ENCODE measurements at regions of chr19 and their contacts with region 1.

Region 1: GRCh38 chr19:52028027-52028779 is at the start of gene ZNF614:
- H3K4me3 Mint-ChIP-seq: peak within 1 kb of the TSS; percentile 98
- H3K27ac Mint-ChIP-seq: peak within 1 kb of the TSS; percentile 100
- H3K4me1 Mint-ChIP-seq: peaks cover 27% of the 10 kb centered on the region
- H3K27me3 Mint-ChIP-seq: no peaks in the 10 kb centered on the region

Region 2: DNA sequence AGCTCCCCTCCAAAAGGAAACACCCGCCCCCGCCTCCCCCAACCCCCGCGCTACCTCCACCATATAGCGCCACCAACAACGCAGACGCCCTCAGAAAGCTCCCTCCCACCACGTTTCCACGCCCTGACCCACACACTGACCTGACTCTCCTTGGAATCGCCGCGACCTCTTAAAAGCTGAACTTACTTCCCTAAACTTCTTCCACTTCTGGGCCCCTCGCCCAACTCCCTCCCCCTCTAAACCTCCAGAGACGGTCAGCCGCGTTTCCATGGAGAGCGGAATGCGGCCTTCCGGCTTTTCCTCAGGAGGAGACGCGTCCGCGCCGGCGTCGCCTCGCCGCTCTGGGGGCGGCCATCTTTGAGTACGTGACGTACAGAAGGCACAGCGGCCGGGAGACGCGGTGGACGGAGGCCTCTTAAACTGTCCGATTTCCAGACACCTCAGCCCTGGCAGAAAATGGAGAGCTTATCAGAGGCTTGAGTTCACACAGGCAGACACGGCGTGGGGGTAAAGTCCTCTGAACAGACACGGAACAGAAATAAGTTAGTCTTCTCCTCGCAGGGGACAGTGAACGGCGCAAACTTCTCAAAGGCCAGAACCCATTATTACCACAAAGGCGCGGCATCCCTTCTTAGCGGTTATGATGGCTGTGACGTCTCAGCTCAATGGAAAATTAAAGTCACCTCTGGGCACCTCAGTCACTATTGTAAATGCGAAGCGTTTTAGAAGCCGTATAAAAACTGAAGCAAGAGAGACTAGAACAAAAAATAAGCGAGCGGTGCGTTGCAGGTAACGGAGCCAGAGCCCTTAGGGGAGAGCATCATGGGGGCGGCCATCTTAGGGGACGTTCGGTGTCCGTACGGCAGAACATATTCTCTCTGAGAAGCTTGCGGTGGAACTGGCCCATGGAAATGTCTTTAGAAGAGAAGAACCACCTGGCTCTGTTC is 20.6 kb after region 1 on chr19 and contains the start of gene ZNF432:
- intact Hi-C with region 1: loop called (anchors 1 kb)
- H3K4me3 Mint-ChIP-seq: peak within 1 kb of the TSS; percentile 83
- H3K27ac Mint-ChIP-seq: peak within 1 kb of the TSS; percentile 98
- H3K4me1 Mint-ChIP-seq: peaks cover 17% of the 10 kb centered on the region
- H3K27me3 Mint-ChIP-seq: no peaks in the 10 kb centered on the region

Region 3: GRCh38 chr19:52086481-52086880 is 58.3 kb after region 1 on chr19:
- intact Hi-C with region 1: no loop called
- H3K4me3 Mint-ChIP-seq: no peak overlapping the region
- H3K27ac Mint-ChIP-seq: no peak overlapping the region
- H3K4me1 Mint-ChIP-seq: peaks cover 5% of the 10 kb centered on the region
- H3K27me3 Mint-ChIP-seq: no peaks in the 10 kb centered on the region